Pancreas (tissue), 10 donors: ENCODE measurements at regions of chr19 and their contacts with region 1.

Region 1: DNA sequence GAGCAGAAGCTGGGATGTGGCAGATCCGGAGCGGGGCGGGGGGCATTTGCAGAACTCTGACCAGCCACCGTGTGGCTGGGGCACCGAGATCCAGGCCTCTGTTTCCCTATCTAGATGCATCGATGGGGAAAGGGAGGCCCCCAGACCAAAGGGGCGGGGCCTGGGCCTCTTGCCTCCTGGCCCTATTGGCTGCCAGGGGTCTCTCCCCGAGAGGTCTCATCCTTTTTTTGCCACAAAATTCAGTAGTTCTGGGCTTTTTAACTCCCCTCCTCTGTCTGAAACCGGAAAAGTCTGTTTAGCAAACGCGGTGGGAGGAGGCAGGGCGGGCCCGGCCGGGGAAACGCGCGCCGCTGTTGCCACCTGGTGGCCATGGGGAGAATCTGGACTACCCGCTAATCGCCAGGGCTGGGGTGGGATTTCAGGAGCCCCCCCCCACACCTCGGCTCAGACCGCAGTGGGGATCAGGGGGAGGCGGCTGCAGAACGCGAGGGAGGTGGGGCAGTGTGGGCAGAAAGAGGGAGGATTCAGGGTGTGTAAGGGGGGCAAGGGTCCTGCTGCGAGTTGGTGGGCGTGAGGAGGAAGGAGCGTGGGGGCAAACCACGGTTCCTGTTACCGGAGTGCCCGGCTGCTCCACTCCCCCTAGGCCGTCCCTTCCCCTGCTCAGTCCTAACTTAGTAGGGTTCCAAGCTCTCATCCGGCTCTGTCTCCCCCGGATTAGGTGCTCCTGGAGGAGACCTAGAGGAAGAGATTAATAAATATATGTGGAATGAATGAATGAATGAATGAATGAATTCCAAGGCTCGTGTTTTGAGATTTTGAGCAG is 28.3 kb downstream of the IL12RB1 start:
- DNase-seq: peak; percentile 69 to 93 (median 82)
- ATAC-seq: peak; percentile 94 to 98 (median 96)
- H3K4me3 ChIP-seq: peak overlapping the region in 1 of 4 donors; percentile 23
- H3K27ac ChIP-seq: peak overlapping the region in 3 of 4 donors; percentile 55 to 77 (median 64)
- H3K4me1 ChIP-seq: peaks cover 0 to 5% (median 0%) of the 10 kb centered on the region in 3 donors
- H3K27me3 ChIP-seq: no peaks in the 10 kb centered on the region
- CTCF ChIP-seq: peak; percentile 80 to 87 (median 86)

Region 2: DNA sequence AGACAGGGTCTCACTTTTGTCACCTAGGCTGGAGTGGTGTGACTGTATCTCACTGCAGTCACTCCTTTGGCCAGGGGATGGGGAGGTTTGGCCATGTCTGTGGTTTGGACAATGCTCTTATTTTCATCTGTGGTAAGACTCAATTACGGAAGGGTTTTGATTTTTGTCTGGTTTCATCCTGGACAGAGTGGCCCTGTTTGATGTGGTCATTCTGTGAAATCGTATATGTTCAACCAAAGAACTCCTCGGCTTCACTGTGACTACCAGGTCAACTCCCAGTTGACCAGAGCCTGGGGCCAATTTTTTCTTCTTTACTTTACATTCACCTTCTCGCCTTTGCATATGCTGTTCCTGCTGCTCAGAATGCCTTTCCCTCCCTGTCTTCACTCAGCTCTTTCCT is 132.4 kb before region 1 on chr19:
- intact Hi-C with region 1: no loop called
- DNase-seq: no peak
- ATAC-seq: no peak
- H3K4me3 ChIP-seq: no peak overlapping the region
- H3K27ac ChIP-seq: no peak overlapping the region
- H3K4me1 ChIP-seq: no peaks in the 10 kb centered on the region
- H3K27me3 ChIP-seq: no peaks in the 10 kb centered on the region
- CTCF ChIP-seq: no peak

Region 3: GRCh38 chr19:17996826-17997316 is 61.5 kb before region 1 on chr19:
- intact Hi-C with region 1: no loop called
- DNase-seq: peak; percentile 75 to 96 (median 90)
- ATAC-seq: peak; percentile 81 to 85 (median 84)
- H3K4me3 ChIP-seq: no peak overlapping the region
- H3K27ac ChIP-seq: no peak overlapping the region
- H3K4me1 ChIP-seq: no peaks in the 10 kb centered on the region
- H3K27me3 ChIP-seq: peaks cover 0 to 4% (median 0%) of the 10 kb centered on the region in 4 donors
- CTCF ChIP-seq: peak; percentile 92 to 98 (median 98)

Region 4: GRCh38 chr19:18007044-18007916 is 51.1 kb before region 1 on chr19:
- intact Hi-C with region 1: loop called in 2 of 3 experiments (anchors 1 to 5 kb)
- DNase-seq: peak; percentile 73 to 96 (median 89)
- ATAC-seq: peak; percentile 85 to 93 (median 90)
- H3K4me3 ChIP-seq: peak overlapping the region; percentile 20 to 53 (median 32)
- H3K27ac ChIP-seq: peak overlapping the region; percentile 58 to 89 (median 76)
- H3K4me1 ChIP-seq: peaks cover 0 to 9% (median 0%) of the 10 kb centered on the region in 3 donors
- H3K27me3 ChIP-seq: no peaks in the 10 kb centered on the region
- CTCF ChIP-seq: peak; percentile 94 to 98 (median 96)